ENCODE measurements at regions of chr3 and their contacts with region 1.

Region 1: GRCh38 chr3:14915636-14916222 is 31.7 kb upstream of the NR2C2 start:
- DNase-seq: peak in 5 of 9 donors; percentile 16 to 51 (median 34)
- ATAC-seq: peak; percentile 58
- H3K4me3 ChIP-seq: no peak overlapping the region
- H3K4me3 Mint-ChIP-seq: no peak overlapping the region
- H3K27ac ChIP-seq: no peak overlapping the region
- H3K27ac Mint-ChIP-seq: no peak overlapping the region
- H3K4me1 ChIP-seq: no peaks in the 10 kb centered on the region
- H3K4me1 Mint-ChIP-seq: no peaks in the 10 kb centered on the region
- H3K27me3 ChIP-seq: no peaks in the 10 kb centered on the region
- H3K27me3 Mint-ChIP-seq: peaks cover 0 to 10% (median 0%) of the 10 kb centered on the region in 5 donors

Region 2: DNA sequence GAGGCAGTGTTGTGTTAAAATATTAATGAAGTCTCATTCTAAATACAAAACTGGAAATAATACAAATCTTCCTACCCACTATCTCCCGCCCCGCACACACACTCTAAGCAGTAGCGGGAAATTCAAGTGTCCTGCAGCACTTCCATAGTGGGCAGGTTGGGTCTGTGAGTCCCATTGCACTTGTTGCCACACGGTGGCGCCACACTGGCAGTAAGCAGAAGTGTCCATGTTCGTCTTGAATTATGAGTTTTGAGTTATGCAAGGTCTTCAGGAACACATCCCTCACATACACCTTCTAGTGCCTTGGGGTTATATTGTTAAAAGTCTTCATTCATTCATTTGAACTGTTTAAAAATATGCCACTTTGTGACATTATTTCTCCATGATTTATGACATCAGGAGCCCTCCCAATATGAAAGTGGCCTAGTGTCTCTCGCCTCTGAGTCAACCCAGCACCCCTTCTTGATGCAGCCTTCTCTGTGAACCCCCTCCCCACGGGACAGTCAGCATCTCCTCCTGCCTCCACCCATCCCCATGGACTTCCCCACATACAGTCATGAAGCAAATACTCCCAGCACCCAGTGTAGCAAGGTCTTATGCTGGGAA is 281.8 kb before region 1 on chr3:
- CTCF ChIA-PET with region 1: interaction called, 36 read pairs
- POLR2A ChIA-PET with region 1: no interaction called
- intact Hi-C with region 1: loop called (anchors 1 kb)
- DNase-seq: peak; percentile 24 to 63 (median 47)
- ATAC-seq: peak; percentile 82
- H3K4me3 ChIP-seq: no peak overlapping the region
- H3K4me3 Mint-ChIP-seq: no peak overlapping the region
- H3K27ac ChIP-seq: no peak overlapping the region
- H3K27ac Mint-ChIP-seq: no peak overlapping the region
- H3K4me1 ChIP-seq: no peaks in the 10 kb centered on the region
- H3K4me1 Mint-ChIP-seq: peaks cover 0 to 2% (median 0%) of the 10 kb centered on the region in 7 donors
- H3K27me3 ChIP-seq: no peaks in the 10 kb centered on the region
- H3K27me3 Mint-ChIP-seq: peaks cover 16 to 46% (median 21%) of the 10 kb centered on the region in 5 donors

Region 3: GRCh38 chr3:14678015-14678503 is 237.7 kb before region 1 on chr3:
- CTCF ChIA-PET with region 1: interaction called, 20 read pairs
- POLR2A ChIA-PET with region 1: no interaction called
- intact Hi-C with region 1: loop called in 1 of 2 experiments (anchors 1 kb)
- DNase-seq: no peak
- ATAC-seq: no peak
- H3K4me3 ChIP-seq: no peak overlapping the region
- H3K4me3 Mint-ChIP-seq: no peak overlapping the region
- H3K27ac ChIP-seq: no peak overlapping the region
- H3K27ac Mint-ChIP-seq: peak overlapping the region in 4 of 9 donors; percentile 22 to 74 (median 56)
- H3K4me1 ChIP-seq: no peaks in the 10 kb centered on the region
- H3K4me1 Mint-ChIP-seq: peaks cover 0 to 1% (median 0%) of the 10 kb centered on the region in 7 donors
- H3K27me3 ChIP-seq: no peaks in the 10 kb centered on the region
- H3K27me3 Mint-ChIP-seq: peaks cover 0 to 3% (median 0%) of the 10 kb centered on the region in 5 donors

Region 4: GRCh38 chr3:14791343-14791945 is 124.3 kb before region 1 on chr3:
- CTCF ChIA-PET with region 1: interaction called, 11 read pairs
- POLR2A ChIA-PET with region 1: no interaction called
- intact Hi-C with region 1: loop called (anchors 1 kb)
- DNase-seq: peak; percentile 23 to 54 (median 33)
- ATAC-seq: peak; percentile 62
- H3K4me3 ChIP-seq: no peak overlapping the region
- H3K4me3 Mint-ChIP-seq: no peak overlapping the region
- H3K27ac ChIP-seq: no peak overlapping the region
- H3K27ac Mint-ChIP-seq: peak overlapping the region in 2 of 9 donors; percentile 14 to 49
- H3K4me1 ChIP-seq: no peaks in the 10 kb centered on the region
- H3K4me1 Mint-ChIP-seq: peaks cover 0 to 4% (median 0%) of the 10 kb centered on the region in 7 donors
- H3K27me3 ChIP-seq: no peaks in the 10 kb centered on the region
- H3K27me3 Mint-ChIP-seq: peaks cover 7 to 29% (median 26%) of the 10 kb centered on the region in 5 donors

Region 5: DNA sequence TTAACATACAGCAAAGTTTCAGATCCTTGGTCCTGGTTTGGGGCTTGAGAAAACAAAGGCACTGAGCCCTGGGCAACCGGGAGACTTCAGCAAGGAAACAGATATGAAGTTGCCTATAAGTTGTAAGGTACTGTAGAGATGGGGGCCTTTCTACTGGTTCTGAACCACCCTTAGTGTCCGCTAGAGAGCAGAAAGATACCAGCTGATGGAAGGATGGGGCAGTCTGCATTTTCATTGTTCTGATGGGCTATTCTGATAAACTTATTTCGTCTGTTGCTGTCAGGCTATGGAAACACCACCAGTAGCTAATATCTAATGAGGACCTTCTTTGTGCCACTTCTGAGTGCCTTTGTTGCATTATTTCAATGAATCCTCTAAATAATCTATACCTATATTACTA is 58.2 kb before region 1 on chr3:
- CTCF ChIA-PET with region 1: interaction called, 3 read pairs
- POLR2A ChIA-PET with region 1: interaction called, 3 read pairs
- intact Hi-C with region 1: loop called (anchors 1 to 2 kb)
- DNase-seq: no peak
- ATAC-seq: no peak
- H3K4me3 ChIP-seq: no peak overlapping the region
- H3K4me3 Mint-ChIP-seq: no peak overlapping the region
- H3K27ac ChIP-seq: no peak overlapping the region
- H3K27ac Mint-ChIP-seq: no peak overlapping the region
- H3K4me1 ChIP-seq: no peaks in the 10 kb centered on the region
- H3K4me1 Mint-ChIP-seq: no peaks in the 10 kb centered on the region
- H3K27me3 ChIP-seq: no peaks in the 10 kb centered on the region
- H3K27me3 Mint-ChIP-seq: peaks cover 0 to 37% (median 6%) of the 10 kb centered on the region in 5 donors

Region 6: GRCh38 chr3:14879211-14879874 is 36.4 kb before region 1 on chr3:
- CTCF ChIA-PET with region 1: interaction called, 10 read pairs
- POLR2A ChIA-PET with region 1: interaction called, 6 read pairs
- intact Hi-C with region 1: loop called in 1 of 2 experiments (anchors 1 kb)
- DNase-seq: peak in 7 of 9 donors; percentile 21 to 59 (median 41)
- ATAC-seq: peak; percentile 65
- H3K4me3 ChIP-seq: no peak overlapping the region
- H3K4me3 Mint-ChIP-seq: peak overlapping the region in 9 of 10 donors; percentile 26 to 62 (median 43)
- H3K27ac ChIP-seq: no peak overlapping the region
- H3K27ac Mint-ChIP-seq: peak overlapping the region; percentile 14 to 93 (median 75)
- H3K4me1 ChIP-seq: peaks cover 4 to 59% of the 10 kb centered on the region in 2 donors
- H3K4me1 Mint-ChIP-seq: peaks cover 34 to 56% (median 48%) of the 10 kb centered on the region in 7 donors
- H3K27me3 ChIP-seq: no peaks in the 10 kb centered on the region
- H3K27me3 Mint-ChIP-seq: peaks cover 0 to 3% (median 0%) of the 10 kb centered on the region in 5 donors

Region 7: GRCh38 chr3:14884680-14885079 is 31.0 kb before region 1 on chr3:
- CTCF ChIA-PET with region 1: interaction called, 10 read pairs
- POLR2A ChIA-PET with region 1: interaction called, 6 read pairs
- intact Hi-C with region 1: loop called in 1 of 2 experiments (anchors 1 kb)
- DNase-seq: peak in 8 of 9 donors; percentile 18 to 50 (median 24)
- ATAC-seq: no peak
- H3K4me3 ChIP-seq: no peak overlapping the region
- H3K4me3 Mint-ChIP-seq: peak overlapping the region; percentile 62 to 77 (median 70)
- H3K27ac ChIP-seq: peak overlapping the region; percentile 19
- H3K27ac Mint-ChIP-seq: peak overlapping the region; percentile 54 to 95 (median 84)
- H3K4me1 ChIP-seq: peaks cover 5 to 61% of the 10 kb centered on the region in 2 donors
- H3K4me1 Mint-ChIP-seq: peaks cover 35 to 68% (median 60%) of the 10 kb centered on the region in 7 donors
- H3K27me3 ChIP-seq: no peaks in the 10 kb centered on the region
- H3K27me3 Mint-ChIP-seq: peaks cover 0 to 13% (median 0%) of the 10 kb centered on the region in 5 donors

Region 8: GRCh38 chr3:15291589-15292541 is 376.1 kb after region 1 on chr3:
- CTCF ChIA-PET with region 1: no interaction called
- POLR2A ChIA-PET with region 1: no interaction called
- intact Hi-C with region 1: no loop called
- DNase-seq: peak in 8 of 9 donors; percentile 61 to 78 (median 68)
- ATAC-seq: peak; percentile 84
- H3K4me3 ChIP-seq: peak overlapping the region; percentile 28
- H3K4me3 Mint-ChIP-seq: peak overlapping the region; percentile 74 to 86 (median 80)
- H3K27ac ChIP-seq: peak overlapping the region; percentile 23
- H3K27ac Mint-ChIP-seq: peak overlapping the region; percentile 77 to 97 (median 94)
- H3K4me1 ChIP-seq: peaks cover 58 to 62% of the 10 kb centered on the region in 2 donors
- H3K4me1 Mint-ChIP-seq: peaks cover 64 to 96% (median 85%) of the 10 kb centered on the region in 7 donors
- H3K27me3 ChIP-seq: no peaks in the 10 kb centered on the region
- H3K27me3 Mint-ChIP-seq: no peaks in the 10 kb centered on the region

Measured in naive thymus-derived CD4-positive, alpha-beta T cell (primary cell).